ENCODE measurements at regions of chr2 and their contacts with region 1.

Region 1: GRCh38 chr2:74198461-74199274 is at the start of gene MTHFD2:
- DNase-seq: peak; percentile 95 to 99 (median 98)
- H3K4me3 ChIP-seq: peak within 1 kb of the TSS; percentile 49 to 96 (median 79)
- H3K27ac ChIP-seq: peak within 1 kb of the TSS; percentile 77 to 94
- H3K4me1 ChIP-seq: peaks cover 0 to 35% (median 21%) of the 10 kb centered on the region in 4 experiments
- H3K27me3 ChIP-seq: no peaks in the 10 kb centered on the region

Region 2: GRCh38 chr2:74178201-74179062 is 20.2 kb before region 1 on chr2 and contains the start of gene MOB1A:
- CTCF ChIA-PET with region 1: interaction called, 39 read pairs
- POLR2A ChIA-PET with region 1: interaction called, 12 read pairs
- DNase-seq: peak; percentile 99
- H3K4me3 ChIP-seq: peak within 1 kb of the TSS; percentile 84 to 97 (median 91)
- H3K27ac ChIP-seq: peak within 1 kb of the TSS; percentile 96 to 98
- H3K4me1 ChIP-seq: peaks cover 14 to 37% (median 24%) of the 10 kb centered on the region in 4 experiments
- H3K27me3 ChIP-seq: no peaks in the 10 kb centered on the region

Region 3: GRCh38 chr2:74183878-74184277 is 14.8 kb before region 1 on chr2:
- CTCF ChIA-PET with region 1: interaction called, 39 read pairs
- POLR2A ChIA-PET with region 1: interaction called, 12 read pairs
- DNase-seq: no peak
- H3K4me3 ChIP-seq: no peak overlapping the region
- H3K27ac ChIP-seq: no peak overlapping the region
- H3K4me1 ChIP-seq: peaks cover 11 to 52% (median 24%) of the 10 kb centered on the region in 4 experiments
- H3K27me3 ChIP-seq: no peaks in the 10 kb centered on the region

Measured in common myeloid progenitor, CD34-positive (primary cell).